GM18951 (cell line): ENCODE measurements at regions of chr15 and their contacts with region 1.

Region 1: GRCh38 chr15:82197733-82198594 is 64.6 kb downstream of the EFL1 start:
- POLR2A ChIP-seq: no peak

Region 2: GRCh38 chr15:82294061-82294690 is 96.2 kb after region 1 on chr15:
- in situ Hi-C with region 1: no loop called
- POLR2A ChIP-seq: no peak

Region 3: GRCh38 chr15:84142888-84143337 is 1944.9 kb after region 1 on chr15:
- in situ Hi-C with region 1: loop called (anchors 10 kb)
- POLR2A ChIP-seq: no peak